ENCODE measurements at regions of chr1 and their contacts with region 1.

Region 1: GRCh38 chr1:12177999-12178441 is 11.2 kb downstream of the TNFRSF1B start:
- DNase-seq: peak; percentile 97 to 99 (median 99)
- H3K4me3 ChIP-seq: peak overlapping the region in 1 of 3 experiments; percentile 98
- H3K4me3 Mint-ChIP-seq: peak overlapping the region; percentile 67 to 87
- H3K27ac ChIP-seq: peak overlapping the region; percentile 99 to 100
- H3K27ac Mint-ChIP-seq: peak overlapping the region; percentile 99 to 100 (median 99)
- H3K4me1 ChIP-seq: peaks cover 100% of the 10 kb centered on the region in 2 donors
- H3K4me1 Mint-ChIP-seq: peaks cover 100% of the 10 kb centered on the region
- H3K27me3 ChIP-seq: no peaks in the 10 kb centered on the region
- H3K27me3 Mint-ChIP-seq: peaks cover 0 to 4% (median 0%) of the 10 kb centered on the region in 3 donors
- CTCF ChIP-seq: no peak

Region 2: GRCh38 chr1:12143631-12144155 is 34.3 kb before region 1 on chr1:
- intact Hi-C with region 1: loop called in 1 of 2 experiments (anchors 5 kb)
- DNase-seq: peak; percentile 96 to 100 (median 98)
- H3K4me3 ChIP-seq: peak overlapping the region in 1 of 3 experiments; percentile 32
- H3K4me3 Mint-ChIP-seq: peak overlapping the region; percentile 54 to 80
- H3K27ac ChIP-seq: peak overlapping the region; percentile 93 to 95
- H3K27ac Mint-ChIP-seq: peak overlapping the region; percentile 95 to 99 (median 99)
- H3K4me1 ChIP-seq: peaks cover 94 to 96% of the 10 kb centered on the region in 2 donors
- H3K4me1 Mint-ChIP-seq: peaks cover 97% of the 10 kb centered on the region
- H3K27me3 ChIP-seq: no peaks in the 10 kb centered on the region
- H3K27me3 Mint-ChIP-seq: no peaks in the 10 kb centered on the region
- CTCF ChIP-seq: no peak

Region 3: GRCh38 chr1:12153181-12153785 is 24.7 kb before region 1 on chr1:
- intact Hi-C with region 1: loop called in 1 of 2 experiments (anchors 2 kb)
- DNase-seq: peak; percentile 98 to 100 (median 99)
- H3K4me3 ChIP-seq: peak overlapping the region in 1 of 3 experiments; percentile 42
- H3K4me3 Mint-ChIP-seq: peak overlapping the region; percentile 48 to 80
- H3K27ac ChIP-seq: peak overlapping the region; percentile 98 to 100
- H3K27ac Mint-ChIP-seq: peak overlapping the region; percentile 99 to 100 (median 100)
- H3K4me1 ChIP-seq: peaks cover 86 to 97% of the 10 kb centered on the region in 2 donors
- H3K4me1 Mint-ChIP-seq: peaks cover 92% of the 10 kb centered on the region
- H3K27me3 ChIP-seq: no peaks in the 10 kb centered on the region
- H3K27me3 Mint-ChIP-seq: peaks cover 0 to 2% (median 2%) of the 10 kb centered on the region in 3 donors
- CTCF ChIP-seq: no peak

Region 4: DNA sequence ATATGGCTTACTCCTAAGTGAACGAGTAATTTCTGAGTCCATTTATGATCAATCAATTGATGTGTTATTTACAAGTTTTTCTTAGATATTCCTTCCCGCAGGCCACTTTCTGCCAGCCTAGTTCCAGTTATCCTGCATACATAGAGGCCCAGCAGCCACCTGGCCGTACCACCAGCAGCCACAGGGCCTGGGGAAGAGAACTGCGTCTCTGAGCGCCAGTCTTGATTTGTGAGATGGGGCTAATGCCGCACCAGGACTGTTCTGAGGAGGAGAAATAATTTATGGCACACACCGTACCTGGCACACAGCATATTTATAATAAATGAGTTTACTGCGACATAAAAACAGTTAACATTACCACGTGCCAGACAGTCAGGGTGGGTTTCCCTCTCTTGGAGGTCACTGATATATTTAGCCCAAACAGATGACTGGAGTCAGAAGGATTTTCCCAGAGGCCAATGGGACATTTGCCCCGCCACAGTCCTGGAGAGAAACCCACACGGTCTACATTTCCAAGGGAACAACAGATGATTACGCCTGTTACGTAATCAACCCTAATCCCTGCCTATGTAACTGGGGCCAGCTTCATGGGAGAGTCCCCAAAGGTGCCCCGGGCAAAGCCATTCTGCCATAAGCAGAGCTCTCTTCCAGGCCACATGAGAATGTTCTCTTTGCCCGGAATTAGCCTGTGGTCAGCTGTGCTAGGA is 401.9 kb after region 1 on chr1:
- intact Hi-C with region 1: no loop called
- DNase-seq: no peak
- H3K4me3 ChIP-seq: no peak overlapping the region
- H3K4me3 Mint-ChIP-seq: no peak overlapping the region
- H3K27ac ChIP-seq: no peak overlapping the region
- H3K27ac Mint-ChIP-seq: no peak overlapping the region
- H3K4me1 ChIP-seq: no peaks in the 10 kb centered on the region
- H3K4me1 Mint-ChIP-seq: no peaks in the 10 kb centered on the region
- H3K27me3 ChIP-seq: no peaks in the 10 kb centered on the region
- H3K27me3 Mint-ChIP-seq: peaks cover 0 to 1% (median under 1%) of the 10 kb centered on the region in 3 donors
- CTCF ChIP-seq: no peak